Head of caudate nucleus (tissue), 42 donors: ENCODE measurements at regions of chr5 and their contacts with region 1.

Region 1: GRCh38 chr5:181223058-181223728 is at the start of gene TRIM41:
- DNase-seq: peak; percentile 95 to 99 (median 98)

Region 2: GRCh38 chr5:181191529-181192394 is 31.4 kb before region 1 on chr5:
- intact Hi-C with region 1: loop called (anchors 1 kb)
- DNase-seq: peak; percentile 86 to 97 (median 94)

Region 3: DNA sequence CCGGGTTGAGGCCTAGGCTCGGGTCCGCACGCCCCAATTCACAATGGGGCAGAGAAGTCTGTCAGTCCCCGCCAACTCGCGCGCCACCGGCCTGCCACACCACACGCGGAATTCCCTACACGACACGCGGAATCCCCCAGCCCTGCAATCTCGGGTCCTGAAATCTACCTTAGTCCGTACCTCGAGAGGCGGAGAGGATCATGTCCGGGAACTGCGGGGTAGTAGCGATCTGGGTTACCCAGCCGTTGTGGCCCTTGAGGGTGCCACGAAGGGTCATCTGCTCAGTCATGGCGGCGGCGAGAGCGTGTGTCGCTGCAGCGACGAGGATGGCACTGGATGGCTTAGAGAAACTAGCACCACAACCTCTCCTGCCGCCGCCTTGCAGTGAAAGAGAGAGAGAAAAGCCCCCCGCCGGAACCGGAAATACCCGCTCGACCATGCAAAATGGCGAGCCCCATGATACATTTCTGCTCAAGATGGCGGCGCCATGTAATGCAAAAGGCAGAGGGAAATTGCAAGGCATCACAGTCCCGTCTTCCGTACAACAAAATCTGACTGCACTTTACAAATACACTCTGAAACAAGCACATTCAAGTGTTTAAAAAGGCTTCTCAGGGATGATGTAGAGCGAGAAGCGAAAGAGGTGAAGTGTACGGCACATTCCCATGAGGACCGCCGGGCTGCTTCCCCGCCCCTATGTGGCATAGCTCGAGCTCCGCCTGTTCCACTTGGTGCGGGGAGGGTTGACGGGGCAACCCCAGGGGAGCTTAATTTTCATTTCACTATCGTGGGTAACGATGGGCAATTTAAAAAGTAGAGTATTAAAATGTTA is 20.5 kb after region 1 on chr5 and contains the start of gene RACK1:
- intact Hi-C with region 1: loop called (anchors 1 kb)
- DNase-seq: peak; percentile 85 to 97 (median 92)

Region 4: GRCh38 chr5:181260387-181261319 is 37.5 kb after region 1 on chr5 and contains the start of gene TRIM52:
- intact Hi-C with region 1: loop called (anchors 5 kb)
- DNase-seq: peak; percentile 83 to 97 (median 93)